ENCODE measurements at regions of chr13 and their contacts with region 1.

Region 1: GRCh38 chr13:84455143-84455905 is 573.0 kb upstream of the SLITRK1 start:
- DNase-seq: no peak
- ATAC-seq: peak; percentile 74
- H3K4me3 ChIP-seq: no peak overlapping the region
- H3K27ac ChIP-seq: no peak overlapping the region
- H3K4me1 ChIP-seq: no peaks in the 10 kb centered on the region
- H3K27me3 ChIP-seq: no peaks in the 10 kb centered on the region
- CTCF ChIP-seq: peak in 1 of 3 experiments; percentile 22; a peak in 2 of 6 replicates
- EP300 ChIP-seq: no peak
- POLR2A ChIP-seq: no peak
- RAD21 ChIP-seq: no peak

Region 2: GRCh38 chr13:84393981-84394625 is 61.2 kb before region 1 on chr13:
- CTCF ChIA-PET with region 1: no interaction called
- POLR2A ChIA-PET with region 1: no interaction called
- RAD21 ChIA-PET with region 1: no interaction called
- SMC1A ChIA-PET with region 1: no interaction called
- in situ Hi-C with region 1: no loop called
- intact Hi-C with region 1: no loop called
- DNase-seq: no peak
- ATAC-seq: no peak
- H3K4me3 ChIP-seq: no peak overlapping the region
- H3K27ac ChIP-seq: no peak overlapping the region
- H3K4me1 ChIP-seq: no peaks in the 10 kb centered on the region
- H3K27me3 ChIP-seq: no peaks in the 10 kb centered on the region
- CTCF ChIP-seq: no peak
- EP300 ChIP-seq: no peak
- POLR2A ChIP-seq: no peak
- RAD21 ChIP-seq: no peak

Region 3: DNA sequence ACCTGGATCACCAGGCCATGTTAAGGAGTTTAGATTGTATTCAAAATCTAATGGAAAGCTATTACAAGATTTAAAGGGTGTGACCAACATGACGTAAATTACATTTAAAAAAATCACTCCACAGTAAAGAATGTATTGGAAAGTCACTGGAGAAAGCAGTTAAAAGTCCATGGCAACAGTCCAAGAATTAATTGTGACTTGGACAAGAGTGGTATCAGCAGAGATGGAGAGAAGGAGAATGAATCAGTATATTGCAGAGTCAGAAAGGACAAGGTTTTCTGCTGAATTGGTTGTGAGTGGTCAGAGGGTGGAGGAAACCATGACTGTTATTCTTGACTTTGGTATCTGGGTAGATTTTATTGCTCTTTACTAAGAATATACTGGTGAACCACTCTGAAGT is 37.9 kb before region 1 on chr13:
- CTCF ChIA-PET with region 1: no interaction called
- POLR2A ChIA-PET with region 1: no interaction called
- RAD21 ChIA-PET with region 1: no interaction called
- SMC1A ChIA-PET with region 1: no interaction called
- in situ Hi-C with region 1: no loop called
- intact Hi-C with region 1: no loop called
- DNase-seq: no peak
- ATAC-seq: no peak
- H3K4me3 ChIP-seq: no peak overlapping the region
- H3K27ac ChIP-seq: no peak overlapping the region
- H3K4me1 ChIP-seq: no peaks in the 10 kb centered on the region
- H3K27me3 ChIP-seq: no peaks in the 10 kb centered on the region
- CTCF ChIP-seq: no peak
- EP300 ChIP-seq: no peak
- POLR2A ChIP-seq: no peak
- RAD21 ChIP-seq: no peak

Region 4: GRCh38 chr13:84574851-84575250 is 119.5 kb after region 1 on chr13:
- CTCF ChIA-PET with region 1: interaction called, 51 read pairs
- POLR2A ChIA-PET with region 1: interaction called, 6 read pairs
- RAD21 ChIA-PET with region 1: interaction called, 10 read pairs
- SMC1A ChIA-PET with region 1: interaction called, 31 read pairs
- in situ Hi-C with region 1: no loop called
- intact Hi-C with region 1: no loop called
- DNase-seq: no peak
- ATAC-seq: 0 out of 3 replicates have a peak, but pooled peaks have one; percentile 42
- H3K4me3 ChIP-seq: no peak overlapping the region
- H3K27ac ChIP-seq: no peak overlapping the region
- H3K4me1 ChIP-seq: no peaks in the 10 kb centered on the region
- H3K27me3 ChIP-seq: no peaks in the 10 kb centered on the region
- CTCF ChIP-seq: no peak; a peak in 1 of 6 replicates
- EP300 ChIP-seq: no peak
- POLR2A ChIP-seq: no peak
- RAD21 ChIP-seq: peak; percentile 5; the same call in 1 of the 2 replicates